Dendritic cell treated with granulocyte-macrophage colony-stimulating factor and Interleukin-4, amounts not matched to agents 40 ng/mL and 50 ng/mL, for 4 days (primary cell): ENCODE measurements at regions of chr14 and their contacts with region 1.

Region 1: GRCh38 chr14:73418227-73418626 is 40.1 kb downstream of the NUMB start:
- H3K4me3 Mint-ChIP-seq: no peak overlapping the region
- H3K27ac Mint-ChIP-seq: no peak overlapping the region
- H3K4me1 Mint-ChIP-seq: peaks cover 33% of the 10 kb centered on the region
- H3K27me3 Mint-ChIP-seq: no peaks in the 10 kb centered on the region

Region 2: GRCh38 chr14:73311708-73312030 is 106.6 kb before region 1 on chr14:
- intact Hi-C with region 1: no loop called
- H3K4me3 Mint-ChIP-seq: no peak overlapping the region
- H3K27ac Mint-ChIP-seq: no peak overlapping the region
- H3K4me1 Mint-ChIP-seq: peaks cover 10% of the 10 kb centered on the region
- H3K27me3 Mint-ChIP-seq: no peaks in the 10 kb centered on the region

Region 3: GRCh38 chr14:73467377-73467776 is 49.1 kb after region 1 on chr14:
- intact Hi-C with region 1: loop called (anchors 5 kb)
- H3K4me3 Mint-ChIP-seq: no peak overlapping the region
- H3K27ac Mint-ChIP-seq: peak overlapping the region; percentile 30
- H3K4me1 Mint-ChIP-seq: peaks cover 62% of the 10 kb centered on the region
- H3K27me3 Mint-ChIP-seq: peaks cover 12% of the 10 kb centered on the region